ENCODE measurements at regions of chr2 and their contacts with region 1.

Region 1: DNA sequence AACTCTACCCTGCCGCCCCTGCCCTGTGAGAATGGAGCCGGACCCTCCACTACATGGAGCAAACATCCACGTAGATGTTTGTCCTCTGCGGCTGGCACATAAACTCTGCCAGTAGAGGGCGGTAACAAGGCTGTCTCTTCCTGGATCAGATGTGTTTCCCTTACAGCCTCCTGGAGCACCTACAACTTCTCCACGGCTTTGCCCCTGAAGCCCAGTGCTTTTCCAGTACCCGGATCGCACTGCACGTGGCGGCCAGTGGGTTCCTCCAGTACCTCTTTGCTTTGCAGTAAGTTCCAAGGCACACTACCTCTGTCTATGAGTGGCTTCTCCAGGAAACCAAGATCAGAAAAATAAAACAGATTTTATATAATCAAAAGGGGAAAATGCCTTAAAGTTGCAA is 651.3 kb downstream of the DCDC2C start:
- DNase-seq: peak; percentile 28
- ATAC-seq: peak; percentile 96
- H3K4me3 ChIP-seq: no peak overlapping the region
- H3K27ac ChIP-seq: no peak overlapping the region
- H3K4me1 ChIP-seq: no peaks in the 10 kb centered on the region
- H3K27me3 ChIP-seq: no peaks in the 10 kb centered on the region
- CTCF ChIP-seq: peak; percentile 71
- EP300 ChIP-seq: no peak
- POLR2A ChIP-seq: no peak
- RAD21 ChIP-seq: peak; percentile 39; the same call in 1 of the 2 replicates

Region 2: DNA sequence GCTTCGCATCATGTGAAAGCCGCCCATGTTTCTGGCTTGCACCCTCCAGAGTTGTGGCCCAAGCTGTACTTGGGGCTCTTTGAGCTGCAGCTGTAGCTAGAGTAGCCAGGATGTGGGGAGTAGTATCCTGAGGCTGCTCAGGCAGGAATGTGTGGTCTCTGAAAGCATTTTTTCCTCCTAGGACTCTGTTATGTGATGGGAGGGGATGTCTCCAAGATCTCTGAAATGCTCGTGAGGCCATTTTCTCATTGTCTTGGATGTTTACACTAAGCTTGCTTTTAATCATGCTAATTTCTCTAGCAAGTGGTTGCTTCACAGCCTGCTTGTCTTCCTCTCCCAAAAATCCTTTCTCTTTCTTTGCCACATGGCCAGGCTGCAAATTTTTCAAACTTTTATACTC is 36.3 kb after region 1 on chr2:
- CTCF ChIA-PET with region 1: no interaction called
- POLR2A ChIA-PET with region 1: no interaction called
- in situ Hi-C with region 1: no loop called
- intact Hi-C with region 1: no loop called
- DNase-seq: no peak
- ATAC-seq: no peak
- H3K4me3 ChIP-seq: no peak overlapping the region
- H3K27ac ChIP-seq: no peak overlapping the region
- H3K4me1 ChIP-seq: no peaks in the 10 kb centered on the region
- H3K27me3 ChIP-seq: no peaks in the 10 kb centered on the region
- CTCF ChIP-seq: no peak
- EP300 ChIP-seq: no peak
- POLR2A ChIP-seq: no peak
- RAD21 ChIP-seq: no peak

Region 3: GRCh38 chr2:4762951-4763376 is 408.3 kb after region 1 on chr2:
- CTCF ChIA-PET with region 1: no interaction called
- POLR2A ChIA-PET with region 1: no interaction called
- in situ Hi-C with region 1: no loop called
- intact Hi-C with region 1: loop called (anchors 10 kb)
- DNase-seq: no peak
- ATAC-seq: no peak
- H3K4me3 ChIP-seq: no peak overlapping the region
- H3K27ac ChIP-seq: no peak overlapping the region
- H3K4me1 ChIP-seq: no peaks in the 10 kb centered on the region
- H3K27me3 ChIP-seq: no peaks in the 10 kb centered on the region
- CTCF ChIP-seq: 0 out of 2 replicates have a peak, but pooled peaks have one; percentile 14
- EP300 ChIP-seq: no peak
- POLR2A ChIP-seq: no peak
- RAD21 ChIP-seq: no peak

Region 4: DNA sequence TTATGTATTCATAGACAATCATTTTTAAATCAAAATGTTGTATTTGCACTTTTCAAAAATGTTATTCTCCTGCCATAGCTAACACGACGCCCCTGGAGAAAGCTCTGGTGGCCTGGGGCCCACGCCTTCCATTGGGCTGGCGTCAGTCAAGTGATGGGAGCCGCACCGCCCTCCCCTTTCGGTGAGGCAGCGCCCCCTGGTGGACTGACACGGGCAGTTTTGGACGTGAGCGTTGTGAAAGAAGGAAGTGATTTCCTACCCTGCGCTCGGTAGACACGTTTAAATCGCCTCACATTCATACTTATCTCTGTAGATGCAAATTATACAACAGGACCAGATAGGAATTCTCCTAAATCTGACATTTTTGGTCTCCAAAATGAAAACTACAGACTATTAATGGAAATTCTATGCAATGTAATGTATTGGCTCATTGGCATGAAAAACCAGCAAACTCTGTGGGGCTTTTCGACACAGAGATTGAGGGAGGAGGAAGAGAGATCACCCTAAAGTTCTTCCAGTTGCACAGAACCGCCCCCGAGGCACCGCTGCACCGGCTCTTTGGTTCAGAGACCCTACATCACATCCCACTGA is 1011.3 kb after region 1 on chr2:
- CTCF ChIA-PET with region 1: no interaction called
- POLR2A ChIA-PET with region 1: no interaction called
- in situ Hi-C with region 1: no loop called
- intact Hi-C with region 1: loop called (anchors 5 kb)
- DNase-seq: peak; percentile 62
- ATAC-seq: peak; percentile 99
- H3K4me3 ChIP-seq: no peak overlapping the region
- H3K27ac ChIP-seq: no peak overlapping the region
- H3K4me1 ChIP-seq: no peaks in the 10 kb centered on the region
- H3K27me3 ChIP-seq: no peaks in the 10 kb centered on the region; a peak in 1 of 5 replicates
- CTCF ChIP-seq: peak; percentile 93
- EP300 ChIP-seq: no peak
- POLR2A ChIP-seq: no peak
- RAD21 ChIP-seq: peak; percentile 65

Measured in HepG2 (cell line).